ENCODE measurements at regions of chr6 and their contacts with region 1.

Region 1: DNA sequence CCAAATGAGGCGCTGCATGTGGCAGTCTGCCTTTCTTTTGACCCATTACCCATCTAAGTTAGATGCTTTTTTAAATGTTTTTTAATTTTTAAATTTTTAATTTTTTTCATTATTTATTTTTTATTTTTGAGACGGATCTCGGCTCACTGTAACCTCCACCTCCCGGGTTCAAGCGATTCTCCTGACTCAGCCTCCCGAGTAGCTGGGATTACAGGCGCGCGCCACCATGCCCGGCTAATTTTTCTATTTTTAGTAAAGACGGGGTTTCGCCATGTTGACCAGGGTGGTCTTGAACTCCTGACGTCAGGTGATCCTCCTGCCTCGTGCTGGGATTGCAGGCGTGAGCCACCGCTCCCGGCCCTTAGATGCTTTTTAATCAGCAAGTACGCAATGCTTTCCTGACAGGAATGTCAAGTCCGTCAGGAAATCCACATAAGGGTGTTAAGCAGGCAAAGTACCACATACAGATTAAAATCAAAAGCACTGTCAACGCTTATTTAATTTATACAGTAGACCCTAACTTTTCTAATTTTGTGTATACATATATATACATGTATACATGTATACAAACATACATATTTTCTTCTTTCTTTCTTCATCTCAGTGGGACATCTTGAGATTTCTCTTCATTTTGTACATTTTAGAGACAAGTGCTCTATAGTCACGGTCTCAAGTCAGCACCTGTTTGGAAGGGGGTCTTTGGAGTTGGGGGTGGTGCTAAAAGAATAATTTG is 995 bp upstream of the GSTA4 start:
- DNase-seq: peak; percentile 42 to 74
- H3K4me3 ChIP-seq: peak overlapping the region; percentile 57
- H3K27ac ChIP-seq: no peak overlapping the region
- H3K4me1 ChIP-seq: peaks cover 25% of the 10 kb centered on the region
- H3K27me3 ChIP-seq: no peaks in the 10 kb centered on the region
- CTCF ChIP-seq: no peak

Region 2: DNA sequence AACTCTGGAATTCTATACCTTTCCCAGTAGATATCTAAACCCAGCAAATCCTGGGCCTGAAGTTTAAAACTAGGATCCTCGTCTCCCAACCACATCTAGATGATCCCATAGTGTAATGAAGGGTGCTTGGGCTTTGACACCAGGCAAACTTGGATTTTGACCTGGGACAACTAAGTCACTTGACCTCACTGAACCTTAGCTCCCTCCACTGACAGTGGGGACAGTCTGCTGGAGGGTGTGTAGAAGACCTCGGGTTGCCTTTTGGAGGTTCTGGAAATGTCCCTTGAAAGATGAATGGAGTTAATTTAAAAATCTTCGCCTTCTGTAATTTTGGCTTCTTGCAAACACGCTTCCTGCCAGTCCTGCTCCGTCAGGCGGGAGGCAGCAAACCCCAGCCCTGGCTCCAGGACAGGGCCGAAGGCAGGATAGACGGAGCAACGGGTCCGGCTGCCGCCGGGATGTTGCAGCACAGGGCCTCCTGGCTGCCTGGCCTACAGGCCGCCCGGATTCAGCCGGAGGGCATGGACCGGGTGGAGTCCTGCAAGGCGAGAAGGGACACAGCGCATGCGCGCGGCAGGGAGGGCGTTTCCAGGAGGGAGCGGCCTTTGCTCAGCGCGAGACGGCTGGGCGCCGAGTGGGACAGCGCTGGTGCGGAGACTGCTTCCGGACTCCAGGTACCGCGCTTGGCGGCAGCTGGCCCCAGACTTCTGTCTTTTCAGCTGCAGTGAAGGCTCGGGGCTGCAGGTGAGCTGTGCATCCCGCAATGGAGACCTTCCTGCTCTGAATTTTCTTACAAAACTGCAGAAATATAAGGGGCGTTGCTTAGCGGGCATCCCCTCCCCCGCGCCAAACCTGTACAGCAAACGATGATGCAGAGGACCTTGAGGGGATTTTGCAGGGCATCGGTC is 325.3 kb before region 1 on chr6 and contains the start of gene TMEM14A:
- CTCF ChIA-PET with region 1: no interaction called
- POLR2A ChIA-PET with region 1: no interaction called
- intact Hi-C with region 1: loop called (anchors 2 kb)
- DNase-seq: peak; percentile 85 to 96
- H3K4me3 ChIP-seq: peak within 1 kb of the TSS; percentile 69
- H3K27ac ChIP-seq: no peak within 1 kb of the TSS
- H3K4me1 ChIP-seq: peaks cover 22% of the 10 kb centered on the region
- H3K27me3 ChIP-seq: no peaks in the 10 kb centered on the region
- CTCF ChIP-seq: no peak
- total RNA-seq, gene TMEM14A: 48.9 and 75.2 TPM in 2 replicates

Region 3: DNA sequence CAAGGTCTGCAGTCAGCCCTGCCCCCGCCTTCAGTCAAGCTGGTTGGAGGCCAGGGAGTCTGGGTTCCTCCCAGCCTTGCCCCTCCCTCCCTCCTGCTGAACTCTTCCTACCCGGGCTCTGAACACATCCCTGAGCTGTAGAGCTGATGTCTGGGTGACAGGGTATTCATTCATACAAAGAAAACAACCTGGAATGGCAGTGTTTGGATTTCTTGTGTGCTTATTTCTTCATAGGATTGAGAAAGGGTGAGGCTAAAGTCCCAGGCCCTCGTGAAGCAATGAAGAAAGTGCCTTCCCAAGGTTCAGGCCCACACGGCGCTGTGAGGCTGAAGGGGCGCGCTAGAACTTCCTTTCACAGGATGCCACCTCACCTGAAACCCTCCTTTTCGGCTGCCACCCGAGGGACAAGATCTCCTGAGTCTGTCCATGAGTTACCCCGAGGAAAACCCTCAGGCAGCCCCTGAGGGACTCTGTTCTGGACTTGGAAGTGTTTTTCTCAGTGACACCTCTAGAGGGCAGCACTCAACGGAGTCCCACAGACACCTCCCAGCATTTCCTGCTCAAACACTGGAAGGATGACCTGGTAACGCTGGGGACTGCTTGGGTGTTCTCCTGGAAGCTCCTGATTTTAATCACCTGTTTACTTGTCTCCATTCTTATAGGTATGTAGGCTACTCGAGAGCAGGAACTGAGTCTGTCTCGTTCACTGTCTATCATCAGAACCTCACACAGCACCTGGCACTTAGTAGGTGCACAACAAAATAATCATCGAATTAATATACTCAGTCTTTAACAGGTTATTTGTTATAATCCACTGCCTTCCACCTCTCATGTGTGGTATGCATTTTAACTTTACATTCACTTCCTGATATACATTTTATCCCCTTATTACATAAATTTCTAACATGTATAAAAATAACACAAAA is 180.6 kb before region 1 on chr6:
- CTCF ChIA-PET with region 1: no interaction called
- POLR2A ChIA-PET with region 1: no interaction called
- intact Hi-C with region 1: loop called (anchors 1 kb)
- DNase-seq: peak; percentile 51 to 54
- H3K4me3 ChIP-seq: no peak overlapping the region
- H3K27ac ChIP-seq: no peak overlapping the region
- H3K4me1 ChIP-seq: no peaks in the 10 kb centered on the region
- H3K27me3 ChIP-seq: no peaks in the 10 kb centered on the region
- CTCF ChIP-seq: peak; percentile 75

Region 4: GRCh38 chr6:52893803-52894649 is 102.1 kb before region 1 on chr6:
- CTCF ChIA-PET with region 1: no interaction called
- POLR2A ChIA-PET with region 1: no interaction called
- intact Hi-C with region 1: no loop called
- DNase-seq: no peak
- H3K4me3 ChIP-seq: no peak overlapping the region
- H3K27ac ChIP-seq: no peak overlapping the region
- H3K4me1 ChIP-seq: no peaks in the 10 kb centered on the region
- H3K27me3 ChIP-seq: no peaks in the 10 kb centered on the region
- CTCF ChIP-seq: no peak

Region 5: DNA sequence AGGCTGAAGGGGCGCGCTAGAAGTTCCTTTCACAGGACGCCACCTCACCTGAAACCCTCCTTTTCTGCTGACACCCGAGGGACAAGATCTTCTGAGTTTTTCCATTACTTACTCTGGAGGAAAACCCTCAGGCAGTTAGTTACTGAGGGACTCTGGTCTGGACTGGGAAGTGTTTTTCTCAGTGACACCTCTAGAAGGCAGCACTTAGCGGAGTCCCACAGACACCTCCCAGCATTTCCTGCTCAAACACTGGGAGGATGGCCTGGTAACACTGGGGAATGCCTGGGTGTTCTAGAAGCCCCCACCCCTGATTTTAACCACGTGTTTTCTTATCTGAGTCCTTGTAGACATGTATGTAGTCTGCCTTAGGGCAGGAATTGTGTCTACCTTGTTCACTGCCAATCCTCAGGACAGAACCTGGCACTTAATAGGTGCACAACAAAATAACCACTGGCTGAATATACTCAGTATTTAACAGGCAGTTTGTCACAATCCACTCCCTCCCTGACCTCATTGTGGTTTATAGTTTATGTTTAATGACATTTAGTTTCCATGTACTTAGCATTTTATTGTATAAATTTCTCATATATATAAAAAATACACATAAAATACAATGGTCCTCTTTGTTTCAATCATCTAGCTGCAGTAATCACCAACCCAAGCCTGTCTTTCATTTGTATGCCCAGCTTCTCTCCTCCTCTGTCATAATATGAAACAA is 91.4 kb before region 1 on chr6:
- CTCF ChIA-PET with region 1: no interaction called
- POLR2A ChIA-PET with region 1: no interaction called
- intact Hi-C with region 1: loop called (anchors 5 kb)
- DNase-seq: no peak
- H3K4me3 ChIP-seq: no peak overlapping the region
- H3K27ac ChIP-seq: no peak overlapping the region
- H3K4me1 ChIP-seq: no peaks in the 10 kb centered on the region
- H3K27me3 ChIP-seq: no peaks in the 10 kb centered on the region
- CTCF ChIP-seq: peak; percentile 34; the same call in 1 of the 2 replicates

Region 6: DNA sequence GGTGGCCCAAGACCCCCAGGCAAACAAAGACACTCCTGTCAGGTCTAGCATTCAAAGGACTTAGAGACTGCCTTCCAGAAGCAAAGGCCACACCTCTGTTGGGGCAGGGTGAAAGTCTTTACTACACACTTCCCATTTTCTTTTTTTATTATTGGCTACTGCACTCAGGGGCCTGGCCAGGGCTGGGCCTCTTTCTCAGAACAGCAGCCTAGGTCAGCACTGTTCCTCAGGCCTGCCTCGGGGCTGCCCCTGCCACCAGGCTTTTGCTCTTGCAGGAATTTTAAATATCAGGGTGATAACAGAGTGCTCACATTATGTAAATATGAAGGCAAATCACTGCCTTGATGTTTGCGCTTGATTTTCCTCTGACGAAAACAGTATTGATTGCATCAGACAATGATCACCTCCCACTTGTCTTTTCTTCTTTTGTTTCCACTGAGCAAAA is 19.5 kb before region 1 on chr6:
- CTCF ChIA-PET with region 1: no interaction called
- POLR2A ChIA-PET with region 1: no interaction called
- intact Hi-C with region 1: no loop called
- DNase-seq: no peak
- H3K4me3 ChIP-seq: no peak overlapping the region
- H3K27ac ChIP-seq: no peak overlapping the region
- H3K4me1 ChIP-seq: no peaks in the 10 kb centered on the region
- H3K27me3 ChIP-seq: no peaks in the 10 kb centered on the region
- CTCF ChIP-seq: no peak

Region 7: GRCh38 chr6:53014063-53014462 is 18.0 kb after region 1 on chr6:
- CTCF ChIA-PET with region 1: no interaction called
- POLR2A ChIA-PET with region 1: no interaction called
- intact Hi-C with region 1: loop called (anchors 1 kb)
- DNase-seq: peak in 1 of 2 experiments; percentile 90
- H3K4me3 ChIP-seq: no peak overlapping the region
- H3K27ac ChIP-seq: peak overlapping the region; percentile 61
- H3K4me1 ChIP-seq: peaks cover 42% of the 10 kb centered on the region
- H3K27me3 ChIP-seq: no peaks in the 10 kb centered on the region
- CTCF ChIP-seq: no peak

Region 8: DNA sequence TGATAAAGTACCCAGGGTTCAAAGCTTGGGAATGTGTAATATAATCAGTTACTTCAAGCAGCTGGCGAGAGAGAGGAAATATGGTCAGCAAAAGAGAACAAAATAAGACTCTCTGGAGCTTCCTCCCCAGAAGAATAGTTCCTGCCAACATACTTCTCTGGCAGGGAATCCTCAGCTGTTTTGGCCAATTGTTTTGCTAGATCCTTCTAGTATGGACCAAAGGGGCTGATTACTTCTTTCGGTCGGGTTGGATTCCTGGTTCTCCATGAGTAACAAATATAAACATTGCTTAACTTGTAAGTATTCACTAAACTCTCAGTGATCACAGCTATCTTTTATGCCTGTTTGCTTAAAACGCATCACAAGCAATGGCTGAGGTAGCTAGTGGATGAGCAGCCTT is 37.7 kb after region 1 on chr6:
- CTCF ChIA-PET with region 1: no interaction called
- POLR2A ChIA-PET with region 1: no interaction called
- intact Hi-C with region 1: no loop called
- DNase-seq: no peak
- H3K4me3 ChIP-seq: no peak overlapping the region
- H3K27ac ChIP-seq: no peak overlapping the region
- H3K4me1 ChIP-seq: no peaks in the 10 kb centered on the region
- H3K27me3 ChIP-seq: no peaks in the 10 kb centered on the region
- CTCF ChIP-seq: no peak

Region 9: GRCh38 chr6:53151676-53152075 is 155.6 kb after region 1 on chr6:
- CTCF ChIA-PET with region 1: no interaction called
- POLR2A ChIA-PET with region 1: no interaction called
- intact Hi-C with region 1: no loop called
- DNase-seq: no peak
- H3K4me3 ChIP-seq: no peak overlapping the region
- H3K27ac ChIP-seq: no peak overlapping the region
- H3K4me1 ChIP-seq: no peaks in the 10 kb centered on the region
- H3K27me3 ChIP-seq: no peaks in the 10 kb centered on the region
- CTCF ChIP-seq: peak; percentile 34; the same call in 1 of the 2 replicates